Activated CD4-positive, alpha-beta T cell treated with anti-CD3 and anti-CD28 coated beads, Interleukin-2, amount 10 ng/mL, durations not matched to agents 7 days and 5 days (primary cell): ENCODE measurements at regions of chr2 and their contacts with region 1.

Region 1: GRCh38 chr2:231530091-231531011 is at the start of gene NMUR1:
- DNase-seq: peak; percentile 73
- H3K4me3 Mint-ChIP-seq: peak within 1 kb of the TSS; percentile 27
- H3K27ac Mint-ChIP-seq: peak within 1 kb of the TSS; percentile 83
- H3K4me1 Mint-ChIP-seq: peaks cover 17% of the 10 kb centered on the region
- H3K27me3 Mint-ChIP-seq: peaks cover 37% of the 10 kb centered on the region
- total RNA-seq, gene NMUR1: 0.47 to 0.60 TPM

Region 2: GRCh38 chr2:231152800-231153557 is 377.4 kb before region 1 on chr2:
- CTCF ChIA-PET with region 1: no interaction called
- POLR2A ChIA-PET with region 1: no interaction called
- DNase-seq: no peak
- H3K4me3 Mint-ChIP-seq: no peak overlapping the region
- H3K27ac Mint-ChIP-seq: no peak overlapping the region
- H3K4me1 Mint-ChIP-seq: no peaks in the 10 kb centered on the region
- H3K27me3 Mint-ChIP-seq: no peaks in the 10 kb centered on the region

Region 3: DNA sequence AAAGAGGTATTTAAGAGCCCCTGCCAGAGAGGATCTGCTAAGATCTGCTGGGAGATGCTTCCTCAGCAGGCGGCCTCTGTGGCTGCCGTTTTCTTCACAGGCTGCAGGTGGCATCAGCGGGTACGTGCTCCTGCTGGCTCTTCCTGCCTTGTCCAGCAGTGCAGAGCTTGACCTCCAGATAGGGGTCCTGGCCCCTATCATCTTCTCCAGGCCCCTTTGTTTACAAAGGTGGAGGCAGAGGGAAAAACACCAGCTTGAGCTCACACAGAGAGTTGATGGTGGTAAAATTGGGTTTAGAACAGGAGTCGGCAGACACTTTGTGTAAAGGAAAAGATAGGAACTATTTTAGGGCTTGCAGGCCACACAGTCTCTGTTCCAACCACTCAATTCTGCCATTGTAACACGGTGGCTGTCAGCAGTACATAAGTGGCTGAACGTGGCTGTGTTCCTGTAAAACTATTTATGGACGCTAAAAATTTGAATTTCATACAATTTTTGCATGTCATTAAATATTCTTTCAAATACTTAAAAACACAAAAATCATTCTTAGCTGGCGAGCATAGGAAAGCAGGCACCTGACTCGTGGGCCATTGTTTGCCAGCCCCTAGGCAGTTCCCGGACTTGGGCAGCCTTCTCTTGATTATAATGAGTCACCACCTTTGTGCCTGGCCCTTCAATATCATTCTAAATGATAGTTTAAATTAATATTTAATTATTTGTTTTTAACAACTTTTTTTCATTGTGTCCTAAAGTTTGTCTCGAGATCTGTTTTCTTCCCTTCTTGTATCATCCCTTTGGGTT is 233.0 kb before region 1 on chr2:
- CTCF ChIA-PET with region 1: no interaction called
- POLR2A ChIA-PET with region 1: no interaction called
- DNase-seq: peak; percentile 29
- H3K4me3 Mint-ChIP-seq: no peak overlapping the region
- H3K27ac Mint-ChIP-seq: no peak overlapping the region
- H3K4me1 Mint-ChIP-seq: peaks cover 4% of the 10 kb centered on the region
- H3K27me3 Mint-ChIP-seq: no peaks in the 10 kb centered on the region

Region 4: DNA sequence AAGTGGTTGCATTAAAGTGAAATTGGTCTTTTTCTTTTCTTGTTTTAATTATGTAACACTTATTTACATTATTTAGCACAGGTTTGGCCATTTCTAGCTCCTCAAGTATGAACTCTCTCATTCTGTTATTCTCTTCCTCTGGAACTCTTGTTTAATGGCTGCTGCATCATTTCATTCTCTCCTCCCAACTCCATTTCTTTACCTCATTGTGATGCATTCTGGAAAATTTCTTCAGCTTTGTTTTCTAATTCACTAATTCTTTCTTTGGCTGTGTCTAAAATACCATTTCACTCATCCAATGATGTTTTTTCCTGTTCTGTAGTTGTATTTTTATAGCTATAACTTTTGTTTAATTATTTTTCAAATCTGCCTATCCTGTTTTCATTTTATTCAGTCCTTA is 22.4 kb after region 1 on chr2:
- CTCF ChIA-PET with region 1: interaction called, 13 read pairs
- POLR2A ChIA-PET with region 1: no interaction called
- DNase-seq: no peak
- H3K4me3 Mint-ChIP-seq: no peak overlapping the region
- H3K27ac Mint-ChIP-seq: no peak overlapping the region
- H3K4me1 Mint-ChIP-seq: peaks cover 48% of the 10 kb centered on the region
- H3K27me3 Mint-ChIP-seq: peaks cover 20% of the 10 kb centered on the region

Region 5: GRCh38 chr2:231632559-231633142 is 102.3 kb after region 1 on chr2:
- CTCF ChIA-PET with region 1: no interaction called
- POLR2A ChIA-PET with region 1: no interaction called
- DNase-seq: no peak
- H3K4me3 Mint-ChIP-seq: no peak overlapping the region
- H3K27ac Mint-ChIP-seq: no peak overlapping the region
- H3K4me1 Mint-ChIP-seq: peaks cover 16% of the 10 kb centered on the region
- H3K27me3 Mint-ChIP-seq: no peaks in the 10 kb centered on the region